Activated T-helper 1 cell treated with anti-CD3 and anti-CD28 coated beads, Interleukin-12 subunit alpha, Interleukin-12 subunit beta, Interleukin-2, Interleukin-4 antibody, amounts not matched to agents 30 ng/mL and 10 ng/mL and 1 ng/mL, durations not matched to agents 14 hours and 24 hours and 36 hours (primary cell): ENCODE measurements at regions of chr9 and their contacts with region 1.

Region 1: DNA sequence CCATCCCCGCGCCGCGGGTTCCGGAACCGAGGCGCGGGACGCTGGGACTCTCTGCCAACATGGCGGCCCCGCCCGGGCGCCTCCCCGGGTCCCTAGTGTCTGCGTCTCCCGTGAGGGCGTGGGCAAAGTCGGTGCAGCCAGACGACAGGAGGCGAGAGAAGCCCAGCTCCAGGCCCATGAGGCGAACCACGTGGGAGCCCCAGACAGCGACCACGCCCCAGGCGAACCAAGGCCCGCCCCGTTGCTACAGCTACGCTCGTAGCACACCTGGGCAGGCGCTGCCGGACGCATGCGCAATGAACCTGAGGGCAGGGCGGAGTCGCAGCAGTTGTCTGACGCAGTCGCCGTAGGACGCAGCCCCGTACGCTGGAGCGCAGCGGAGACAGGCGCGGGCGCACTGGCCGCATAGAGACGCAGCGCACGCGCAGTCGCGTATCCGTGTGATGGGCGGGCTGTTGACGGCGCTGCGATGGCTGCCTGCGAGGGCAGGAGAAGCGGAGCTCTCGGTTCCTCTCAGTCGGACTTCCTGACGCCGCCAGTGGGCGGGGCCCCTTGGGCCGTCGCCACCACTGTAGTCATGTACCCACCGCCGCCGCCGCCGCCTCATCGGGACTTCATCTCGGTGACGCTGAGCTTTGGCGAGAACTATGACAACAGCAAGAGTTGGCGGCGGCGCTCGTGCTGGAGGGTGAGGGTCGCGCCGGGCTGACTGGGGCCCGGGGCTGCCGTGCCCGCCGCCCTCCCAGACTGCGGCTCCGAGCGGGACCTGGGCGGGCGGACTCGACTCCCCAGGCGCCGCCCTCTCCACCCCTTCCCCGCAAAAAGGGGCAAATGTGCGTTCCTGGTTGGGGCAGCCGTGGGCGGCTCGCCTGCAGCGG is at the start of gene MAN1B1:
- DNase-seq: peak; percentile 100
- H3K4me3 Mint-ChIP-seq: peak within 1 kb of the TSS; percentile 88
- H3K27ac Mint-ChIP-seq: peak within 1 kb of the TSS; percentile 94
- H3K4me1 Mint-ChIP-seq: peaks cover 33% of the 10 kb centered on the region
- H3K27me3 Mint-ChIP-seq: no peaks in the 10 kb centered on the region
- total RNA-seq, gene MAN1B1: 48.1 and 53.6 TPM in 2 replicates

Region 2: GRCh38 chr9:136363606-136364370 is 723.0 kb before region 1 on chr9 and contains the start of gene DNLZ:
- intact Hi-C with region 1: loop called (anchors 2 kb)
- DNase-seq: peak; percentile 83
- H3K4me3 Mint-ChIP-seq: peak within 1 kb of the TSS; percentile 83
- H3K27ac Mint-ChIP-seq: peak within 1 kb of the TSS; percentile 79
- H3K4me1 Mint-ChIP-seq: peaks cover 6% of the 10 kb centered on the region
- H3K27me3 Mint-ChIP-seq: no peaks in the 10 kb centered on the region
- total RNA-seq, gene DNLZ: 35.2 TPM in 2 replicates

Region 3: GRCh38 chr9:136885950-136886578 is 200.7 kb before region 1 on chr9 and contains the start of gene TRAF2:
- intact Hi-C with region 1: loop called (anchors 5 kb)
- DNase-seq: peak; percentile 99
- H3K4me3 Mint-ChIP-seq: peak within 1 kb of the TSS; percentile 98
- H3K27ac Mint-ChIP-seq: peak within 1 kb of the TSS; percentile 93
- H3K4me1 Mint-ChIP-seq: peaks cover 44% of the 10 kb centered on the region
- H3K27me3 Mint-ChIP-seq: no peaks in the 10 kb centered on the region
- total RNA-seq, gene TRAF2: 67.4 and 76.3 TPM in 2 replicates

Region 4: GRCh38 chr9:137070201-137070905 is 16.4 kb before region 1 on chr9 and contains the start of gene SAPCD2:
- intact Hi-C with region 1: loop called (anchors 1 kb)
- DNase-seq: peak; percentile 85
- H3K4me3 Mint-ChIP-seq: peak within 1 kb of the TSS; percentile 86
- H3K27ac Mint-ChIP-seq: peak within 1 kb of the TSS; percentile 91
- H3K4me1 Mint-ChIP-seq: peaks cover 16% of the 10 kb centered on the region
- H3K27me3 Mint-ChIP-seq: peaks cover 3% of the 10 kb centered on the region
- total RNA-seq, gene SAPCD2: 23.9 and 25.1 TPM in 2 replicates

Region 5: GRCh38 chr9:137129456-137130175 is 42.8 kb after region 1 on chr9:
- intact Hi-C with region 1: loop called (anchors 2 kb)
- DNase-seq: peak; percentile 91
- H3K4me3 Mint-ChIP-seq: peak overlapping the region; percentile 90
- H3K27ac Mint-ChIP-seq: peak overlapping the region; percentile 79
- H3K4me1 Mint-ChIP-seq: peaks cover 24% of the 10 kb centered on the region
- H3K27me3 Mint-ChIP-seq: peaks cover 5% of the 10 kb centered on the region

Region 6: GRCh38 chr9:137492464-137493162 is 405.8 kb after region 1 on chr9:
- intact Hi-C with region 1: no loop called
- DNase-seq: peak; percentile 8
- H3K4me3 Mint-ChIP-seq: no peak overlapping the region
- H3K27ac Mint-ChIP-seq: no peak overlapping the region
- H3K4me1 Mint-ChIP-seq: no peaks in the 10 kb centered on the region
- H3K27me3 Mint-ChIP-seq: no peaks in the 10 kb centered on the region